ENCODE measurements at regions of chr3 and their contacts with region 1.

Region 1: DNA sequence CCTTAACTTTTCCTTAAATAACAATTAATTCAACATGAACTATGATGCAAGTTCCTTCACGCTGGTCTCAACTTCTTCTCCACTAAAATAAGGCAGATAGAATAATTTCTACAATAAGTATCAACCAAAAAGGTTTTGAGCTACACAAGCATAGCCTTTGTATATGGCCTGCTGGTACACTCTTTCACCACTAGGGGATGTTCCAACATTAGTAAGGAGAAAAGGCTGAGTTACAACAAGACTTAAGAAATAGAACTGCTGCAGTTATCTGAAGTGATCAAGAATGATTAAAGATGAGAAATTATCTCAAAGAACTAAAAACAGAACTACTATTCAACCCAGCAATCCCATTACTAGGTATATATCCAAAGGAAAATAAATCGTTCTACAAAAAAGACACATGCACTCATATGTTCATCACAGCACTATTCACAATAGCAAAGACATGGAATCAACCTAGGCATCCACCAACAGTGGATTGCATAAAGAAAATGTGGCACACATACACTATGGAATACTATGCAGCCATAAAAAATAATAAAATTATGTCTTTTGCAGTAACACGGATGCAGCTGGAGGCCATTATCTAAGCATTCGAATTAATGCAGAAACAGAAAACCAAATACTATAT is 14.4 kb downstream of the ATP13A3 start:
- DNase-seq: peak; percentile 81
- H3K4me3 ChIP-seq: no peak overlapping the region
- H3K27ac ChIP-seq: no peak overlapping the region
- H3K4me1 ChIP-seq: peaks cover 59% of the 10 kb centered on the region
- H3K27me3 ChIP-seq: no peaks in the 10 kb centered on the region
- CTCF ChIP-seq: peak; percentile 83

Region 2: DNA sequence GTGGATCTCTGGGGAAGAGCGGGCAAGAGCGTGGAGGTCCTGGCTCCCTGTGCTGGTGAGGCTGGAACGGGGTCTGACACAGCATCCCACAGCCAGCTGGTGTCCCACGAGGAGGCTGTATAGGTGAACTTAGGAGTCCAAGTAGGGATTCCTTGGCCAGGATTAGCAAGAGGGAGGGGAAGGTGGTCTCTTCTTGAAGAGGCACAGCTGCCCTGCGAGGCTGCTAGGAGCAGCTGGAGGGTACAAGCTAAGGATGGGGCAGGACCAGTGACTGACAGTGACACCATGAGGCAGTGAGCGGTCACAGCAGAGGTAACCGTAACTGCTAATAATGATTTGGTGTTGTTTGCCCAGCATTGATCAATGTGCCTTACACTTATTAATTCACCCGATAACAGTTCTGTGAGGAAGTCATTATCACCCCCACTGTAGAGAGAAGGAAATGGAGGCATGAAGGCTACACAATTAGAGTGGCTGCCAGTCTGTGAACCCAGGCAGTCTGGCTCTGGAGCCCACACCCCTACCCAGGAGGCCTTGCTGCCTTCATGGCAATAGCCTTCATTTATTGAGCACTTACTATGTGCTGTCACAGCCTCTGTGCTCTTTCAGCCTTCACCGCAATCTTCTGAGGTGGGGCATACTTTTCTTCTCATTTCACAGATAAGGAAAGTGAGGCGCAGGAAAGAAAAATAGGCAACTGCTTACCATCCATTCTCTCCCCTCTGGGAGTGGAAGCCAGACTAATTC is 101.5 kb after region 1 on chr3:
- CTCF ChIA-PET with region 1: interaction called, 9 read pairs
- POLR2A ChIA-PET with region 1: no interaction called
- intact Hi-C with region 1: loop called (anchors 5 kb)
- DNase-seq: peak; percentile 78
- H3K4me3 ChIP-seq: no peak overlapping the region
- H3K27ac ChIP-seq: no peak overlapping the region
- H3K4me1 ChIP-seq: peaks cover 16% of the 10 kb centered on the region
- H3K27me3 ChIP-seq: no peaks in the 10 kb centered on the region
- CTCF ChIP-seq: peak; percentile 80

Region 3: GRCh38 chr3:194592798-194593752 is 120.7 kb after region 1 on chr3:
- CTCF ChIA-PET with region 1: interaction called, 5 read pairs
- POLR2A ChIA-PET with region 1: interaction called, 5 read pairs
- intact Hi-C with region 1: loop called (anchors 2 kb)
- DNase-seq: peak; percentile 94
- H3K4me3 ChIP-seq: no peak overlapping the region
- H3K27ac ChIP-seq: peak overlapping the region; percentile 58
- H3K4me1 ChIP-seq: peaks cover 8% of the 10 kb centered on the region
- H3K27me3 ChIP-seq: no peaks in the 10 kb centered on the region
- CTCF ChIP-seq: no peak